A549 (cell line): ENCODE measurements at regions of chr22 and their contacts with region 1.

Region 1: DNA sequence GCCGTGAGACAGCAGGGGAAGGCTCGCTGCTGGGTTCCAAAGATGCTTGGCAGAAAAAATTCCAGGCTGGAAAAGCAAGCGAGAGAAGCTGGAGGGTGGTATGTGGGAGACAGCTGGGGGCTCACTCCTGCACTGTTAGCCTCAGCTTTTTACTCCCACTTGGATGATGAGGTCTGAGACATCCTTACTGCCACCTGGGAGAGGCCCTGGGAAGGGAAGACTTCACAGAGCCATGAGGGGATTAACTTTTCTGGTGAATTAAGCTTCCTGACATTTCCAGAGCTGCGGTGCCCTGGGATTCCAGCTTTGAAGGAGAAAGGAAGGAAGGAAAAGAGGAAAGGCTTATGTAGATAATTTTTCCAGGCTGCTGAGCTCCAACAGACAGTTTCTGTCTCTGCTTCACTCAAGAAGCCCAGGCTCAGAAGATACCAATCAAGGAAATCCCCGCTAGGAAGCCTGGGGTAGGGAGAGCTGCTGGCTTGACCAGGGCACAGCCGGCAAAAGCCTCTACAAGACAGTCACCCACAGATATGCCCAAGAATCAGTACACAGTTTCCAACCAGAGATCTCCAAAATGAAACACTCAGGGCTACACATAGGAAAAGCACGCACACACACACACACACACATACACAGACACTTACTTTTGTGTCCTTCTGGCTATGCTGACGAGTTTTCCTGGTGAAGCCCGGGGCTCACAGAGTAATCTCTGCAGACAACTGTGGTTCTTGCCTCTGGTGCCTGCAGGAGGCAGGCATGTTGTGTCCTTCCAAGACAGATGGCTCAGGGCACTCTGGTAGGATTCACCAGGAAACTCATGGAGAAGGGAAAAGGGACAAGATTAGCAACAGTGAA is 907 bp downstream of the MCHR1 start:
- DNase-seq: peak in 1 of 2 experiments; percentile 15
- ATAC-seq: 0 out of 6 replicates have a peak, but pooled peaks of 1 of the 2 experiments have one; percentile 20
- H3K4me3 ChIP-seq: no peak overlapping the region
- H3K27ac ChIP-seq: no peak overlapping the region
- H3K4me1 ChIP-seq: peaks cover 8% of the 10 kb centered on the region
- CTCF ChIP-seq: no peak
- EP300 ChIP-seq: no peak
- POLR2A ChIP-seq: no peak
- RAD21 ChIP-seq: peak in 1 of 2 experiments; percentile 20; a peak in 1 of 5 replicates

Region 2: GRCh38 chr22:40572976-40573375 is 107.2 kb before region 1 on chr22:
- CTCF ChIA-PET with region 1: no interaction called
- POLR2A ChIA-PET with region 1: no interaction called
- DNase-seq: no peak
- ATAC-seq: no peak
- H3K4me3 ChIP-seq: no peak overlapping the region
- H3K27ac ChIP-seq: no peak overlapping the region
- H3K4me1 ChIP-seq: peaks cover 5% of the 10 kb centered on the region
- CTCF ChIP-seq: no peak
- EP300 ChIP-seq: no peak
- POLR2A ChIP-seq: no peak
- RAD21 ChIP-seq: no peak

Region 3: GRCh38 chr22:40603088-40603605 is 77.0 kb before region 1 on chr22:
- CTCF ChIA-PET with region 1: no interaction called
- POLR2A ChIA-PET with region 1: no interaction called
- DNase-seq: peak in 1 of 2 experiments; percentile 29
- ATAC-seq: peak; percentile 59 to 70; a peak in 5 of 6 replicates
- H3K4me3 ChIP-seq: no peak overlapping the region
- H3K27ac ChIP-seq: peak overlapping the region; percentile 49 to 79
- H3K4me1 ChIP-seq: peaks cover 88% of the 10 kb centered on the region
- CTCF ChIP-seq: no peak
- EP300 ChIP-seq: no peak
- POLR2A ChIP-seq: no peak
- RAD21 ChIP-seq: no peak

Region 4: GRCh38 chr22:40661671-40662070 is 18.5 kb before region 1 on chr22:
- CTCF ChIA-PET with region 1: interaction called, 11 read pairs
- POLR2A ChIA-PET with region 1: no interaction called
- DNase-seq: no peak
- ATAC-seq: no peak
- H3K4me3 ChIP-seq: no peak overlapping the region
- H3K27ac ChIP-seq: no peak overlapping the region
- H3K4me1 ChIP-seq: no peaks in the 10 kb centered on the region
- CTCF ChIP-seq: no peak
- EP300 ChIP-seq: no peak
- POLR2A ChIP-seq: no peak
- RAD21 ChIP-seq: no peak

Region 5: GRCh38 chr22:40694411-40694810 is 14.2 kb after region 1 on chr22:
- CTCF ChIA-PET with region 1: interaction called, 17 read pairs
- POLR2A ChIA-PET with region 1: interaction called, 3 read pairs
- DNase-seq: no peak
- ATAC-seq: no peak
- H3K4me3 ChIP-seq: no peak overlapping the region
- H3K27ac ChIP-seq: no peak overlapping the region
- H3K4me1 ChIP-seq: no peaks in the 10 kb centered on the region
- CTCF ChIP-seq: no peak
- EP300 ChIP-seq: no peak
- POLR2A ChIP-seq: no peak
- RAD21 ChIP-seq: no peak

Region 6: GRCh38 chr22:40714192-40714951 is 34.2 kb after region 1 on chr22:
- CTCF ChIA-PET with region 1: interaction called, 23 read pairs
- POLR2A ChIA-PET with region 1: no interaction called
- DNase-seq: peak in 1 of 2 experiments; percentile 78
- ATAC-seq: peak; percentile 49 to 52; a peak in 5 of 6 replicates
- H3K4me3 ChIP-seq: no peak overlapping the region
- H3K27ac ChIP-seq: peak overlapping the region; percentile 23 to 64
- H3K4me1 ChIP-seq: peaks cover 50% of the 10 kb centered on the region
- CTCF ChIP-seq: no peak
- EP300 ChIP-seq: no peak
- POLR2A ChIP-seq: no peak
- RAD21 ChIP-seq: no peak

Region 7: GRCh38 chr22:40768206-40768605 is 88.0 kb after region 1 on chr22:
- CTCF ChIA-PET with region 1: interaction called, 127 read pairs
- POLR2A ChIA-PET with region 1: no interaction called
- DNase-seq: no peak
- ATAC-seq: no peak
- H3K4me3 ChIP-seq: no peak overlapping the region
- H3K27ac ChIP-seq: no peak overlapping the region
- H3K4me1 ChIP-seq: no peaks in the 10 kb centered on the region
- CTCF ChIP-seq: no peak
- EP300 ChIP-seq: no peak
- POLR2A ChIP-seq: no peak
- RAD21 ChIP-seq: no peak